ENCODE measurements at regions of chr10 and their contacts with region 1.

Region 1: GRCh38 chr10:1074748-1075308 is 18.6 kb downstream of the WDR37 start:
- DNase-seq: peak in 2 of 9 experiments; percentile 36 to 53
- ATAC-seq: peak; percentile 31
- H3K4me3 ChIP-seq: no peak overlapping the region
- H3K4me3 Mint-ChIP-seq: no peak overlapping the region
- H3K27ac ChIP-seq: no peak overlapping the region
- H3K27ac Mint-ChIP-seq: peak overlapping the region; percentile 55
- H3K4me1 ChIP-seq: peaks cover 4% of the 10 kb centered on the region
- H3K4me1 Mint-ChIP-seq: peaks cover 26% of the 10 kb centered on the region
- H3K27me3 ChIP-seq: no peaks in the 10 kb centered on the region
- H3K27me3 Mint-ChIP-seq: no peaks in the 10 kb centered on the region
- CTCF ChIP-seq: peak; percentile 18

Region 2: DNA sequence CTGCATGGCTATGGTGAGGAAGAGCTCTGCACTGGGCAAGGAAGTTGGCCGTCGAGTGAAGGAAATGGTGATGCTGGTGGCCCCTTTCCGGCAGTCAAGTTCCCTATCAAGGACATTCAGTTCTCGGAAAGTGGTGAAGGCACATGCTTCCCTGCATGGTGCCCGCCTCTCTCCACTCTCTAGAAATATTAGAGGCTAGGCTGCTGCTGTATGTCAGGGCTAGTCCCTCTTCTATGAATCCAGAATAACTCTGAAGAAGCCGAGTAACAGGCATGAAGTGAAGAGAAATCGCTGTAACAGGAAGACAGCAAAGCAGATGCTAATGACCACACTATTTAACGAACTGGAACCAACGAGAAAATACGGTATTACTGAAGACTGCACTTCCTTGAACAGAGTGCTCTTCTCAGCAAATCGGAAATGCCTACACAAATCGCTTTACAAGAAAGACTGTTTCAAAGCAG is 31.3 kb before region 1 on chr10:
- CTCF ChIA-PET with region 1: interaction called, 3 read pairs
- POLR2A ChIA-PET with region 1: interaction called, 7 read pairs
- intact Hi-C with region 1: loop called (anchors 2 to 5 kb)
- DNase-seq: peak in 2 of 9 experiments; percentile 42 to 64
- ATAC-seq: no peak
- H3K4me3 ChIP-seq: peak overlapping the region; percentile 8 to 41
- H3K4me3 Mint-ChIP-seq: peak overlapping the region; percentile 75
- H3K27ac ChIP-seq: peak overlapping the region; percentile 11 to 76
- H3K27ac Mint-ChIP-seq: peak overlapping the region; percentile 83
- H3K4me1 ChIP-seq: peaks cover 41% of the 10 kb centered on the region
- H3K4me1 Mint-ChIP-seq: peaks cover 41% of the 10 kb centered on the region
- H3K27me3 ChIP-seq: no peaks in the 10 kb centered on the region
- H3K27me3 Mint-ChIP-seq: no peaks in the 10 kb centered on the region
- CTCF ChIP-seq: no peak

Measured in CD8-positive, alpha-beta T cell (primary cell).